ENCODE measurements at regions of chr11 and their contacts with region 1.

Region 1: DNA sequence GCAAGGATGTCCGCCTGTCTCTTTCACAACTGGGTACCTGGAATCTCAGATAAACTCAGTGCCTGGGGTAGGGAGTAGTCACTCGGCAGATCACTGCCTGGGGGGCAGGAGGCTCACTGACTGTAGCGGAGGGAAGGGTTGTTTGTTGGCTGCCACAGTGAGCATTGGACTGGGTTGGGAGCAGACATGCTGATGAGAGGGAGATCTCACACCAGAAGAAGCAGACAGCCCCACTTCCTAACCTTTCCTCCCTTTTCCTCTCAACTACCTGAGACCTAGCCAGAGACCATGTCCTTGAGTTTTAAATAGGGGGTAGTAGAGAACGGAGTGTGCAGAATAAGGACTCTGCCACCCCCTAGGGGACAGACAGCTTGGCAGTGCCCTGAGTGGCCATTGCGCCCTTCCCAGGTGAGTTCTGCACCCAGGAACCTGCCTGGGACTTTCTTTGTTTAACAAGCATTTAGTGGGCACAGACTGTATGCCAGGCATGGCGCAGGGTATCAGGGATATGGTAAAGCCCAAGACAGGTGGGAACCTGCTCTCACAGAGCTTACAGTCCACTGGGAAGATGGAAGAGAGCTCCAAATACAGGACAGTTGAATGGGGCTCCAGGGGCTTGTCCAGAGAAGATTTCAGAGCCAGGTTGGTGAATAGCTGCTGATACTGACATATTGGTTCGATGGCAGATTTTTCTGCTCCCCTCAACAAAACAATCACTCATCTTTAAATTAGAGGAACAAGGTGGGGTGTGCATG is 115.7 kb upstream of the NNMT start:
- DNase-seq: peak; percentile 74
- H3K4me3 ChIP-seq: no peak overlapping the region
- H3K27ac ChIP-seq: peak overlapping the region; percentile 63
- H3K4me1 ChIP-seq: peaks cover 17% of the 10 kb centered on the region
- H3K27me3 ChIP-seq: no peaks in the 10 kb centered on the region
- CTCF ChIP-seq: peak; percentile 63

Region 2: DNA sequence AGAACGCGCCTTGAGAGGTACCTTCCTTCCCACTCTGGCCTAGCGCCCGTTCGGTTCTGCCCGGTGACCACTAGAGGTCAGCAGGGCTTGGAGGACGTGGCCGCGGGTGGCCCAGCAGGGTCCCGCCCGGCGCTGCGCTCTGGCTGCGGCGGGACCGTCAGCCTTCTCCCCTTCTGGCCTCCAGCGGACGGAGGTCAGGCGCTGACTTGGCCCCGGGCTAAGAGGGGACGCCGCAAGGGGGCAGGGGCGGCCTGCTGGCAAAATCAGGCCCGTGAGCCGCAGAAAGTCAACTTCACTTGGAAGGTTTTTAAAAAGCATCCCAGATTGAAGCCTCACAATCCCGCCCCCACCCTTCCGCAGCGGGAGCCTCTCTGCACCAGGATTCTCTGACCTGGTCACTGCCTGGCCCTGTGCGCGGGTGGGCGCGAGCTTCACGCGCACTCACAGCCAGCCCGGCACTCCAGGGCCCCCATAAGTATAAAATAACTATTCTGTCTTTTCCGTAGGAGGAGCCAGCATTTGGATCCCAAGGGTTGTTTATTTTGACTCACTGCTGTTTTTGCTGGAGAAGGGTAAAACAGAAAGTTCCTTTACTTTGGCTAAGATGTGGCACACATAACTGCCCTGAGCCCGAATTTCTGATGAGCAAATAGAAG is 144.2 kb before region 1 on chr11:
- intact Hi-C with region 1: loop called (anchors 5 kb)
- DNase-seq: peak; percentile 86
- H3K4me3 ChIP-seq: peak overlapping the region; percentile 17
- H3K27ac ChIP-seq: peak overlapping the region; percentile 18
- H3K4me1 ChIP-seq: no peaks in the 10 kb centered on the region
- H3K27me3 ChIP-seq: no peaks in the 10 kb centered on the region
- CTCF ChIP-seq: peak; percentile 81

Region 3: GRCh38 chr11:114060392-114061350 is 119.8 kb before region 1 on chr11:
- intact Hi-C with region 1: loop called (anchors 5 kb)
- DNase-seq: peak; percentile 51
- H3K4me3 ChIP-seq: peak overlapping the region; percentile 76
- H3K27ac ChIP-seq: peak overlapping the region; percentile 66
- H3K4me1 ChIP-seq: peaks cover 7% of the 10 kb centered on the region
- H3K27me3 ChIP-seq: peaks cover 8% of the 10 kb centered on the region
- CTCF ChIP-seq: no peak

Region 4: GRCh38 chr11:114099392-114100178 is 80.9 kb before region 1 on chr11:
- intact Hi-C with region 1: no loop called
- DNase-seq: no peak
- H3K4me3 ChIP-seq: no peak overlapping the region
- H3K27ac ChIP-seq: no peak overlapping the region
- H3K4me1 ChIP-seq: no peaks in the 10 kb centered on the region
- H3K27me3 ChIP-seq: no peaks in the 10 kb centered on the region
- CTCF ChIP-seq: no peak

Region 5: DNA sequence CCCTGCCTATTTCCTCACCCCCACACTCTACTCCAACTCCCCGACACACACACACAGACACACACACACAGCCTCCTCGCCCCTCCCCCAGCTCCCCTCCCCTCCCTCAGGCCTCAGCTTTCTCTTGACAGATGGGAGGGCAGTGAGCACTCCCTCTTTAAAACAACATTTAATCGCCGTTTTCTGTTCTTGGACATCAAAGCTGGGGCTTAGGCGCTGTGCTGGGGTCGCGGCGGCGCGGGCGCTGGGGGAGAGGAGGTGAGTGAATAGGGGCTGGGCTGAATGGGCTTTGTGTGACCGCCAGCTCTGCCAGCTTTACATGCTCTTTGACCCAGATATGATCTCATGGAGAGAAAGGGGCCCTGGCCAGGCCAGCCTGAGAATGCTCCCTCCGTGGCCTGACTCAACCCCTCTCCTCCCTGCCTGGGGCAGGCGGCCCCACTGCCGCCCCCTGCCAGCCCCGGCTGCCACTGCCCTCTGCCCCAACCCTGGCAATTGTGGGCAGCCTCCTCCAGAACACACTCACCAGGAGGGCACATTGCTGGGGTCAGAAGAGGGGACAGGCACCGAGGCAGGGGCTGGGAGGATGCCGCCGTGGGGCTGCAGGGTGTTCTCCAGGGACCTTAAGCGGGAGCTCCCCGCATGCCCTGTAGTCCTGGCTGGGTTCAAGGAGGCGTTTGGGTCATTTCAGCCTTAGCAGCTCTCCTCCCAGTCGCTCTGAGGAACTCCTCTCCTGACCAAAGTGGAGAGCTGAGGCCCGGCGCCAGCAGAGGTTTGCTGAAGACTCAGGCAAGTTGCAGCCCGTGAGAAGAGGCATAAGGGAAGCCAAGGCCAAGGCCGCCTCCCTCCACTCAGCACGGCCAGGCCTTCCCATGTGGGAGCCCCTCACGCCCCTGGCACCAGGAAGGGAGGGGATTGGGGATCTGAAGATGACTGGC is 77.4 kb after region 1 on chr11:
- intact Hi-C with region 1: loop called (anchors 5 kb)
- DNase-seq: no peak
- H3K4me3 ChIP-seq: no peak overlapping the region
- H3K27ac ChIP-seq: no peak overlapping the region
- H3K4me1 ChIP-seq: no peaks in the 10 kb centered on the region
- H3K27me3 ChIP-seq: no peaks in the 10 kb centered on the region
- CTCF ChIP-seq: no peak